GM12878 (cell line): ENCODE measurements at regions of chrX and their contacts with region 1.

Region 1: GRCh38 chrX:65595460-65595876 is 60.9 kb upstream of the LAS1L start:
- DNase-seq: peak; percentile 89
- ATAC-seq: peak; percentile 88
- H3K4me3 ChIP-seq: no peak overlapping the region
- H3K27ac ChIP-seq: peak overlapping the region; percentile 67
- H3K4me1 ChIP-seq: peaks cover 19% of the 10 kb centered on the region
- H3K27me3 ChIP-seq: no peaks in the 10 kb centered on the region
- CTCF ChIP-seq: peak; percentile 98 to 100 (median 99); a peak in 5 of 6 replicates
- EP300 ChIP-seq: no peak
- POLR2A ChIP-seq: no peak
- RAD21 ChIP-seq: peak; percentile 94

Region 2: GRCh38 chrX:65667503-65668376 is 72.3 kb after region 1 on chrX and contains the start of gene MSN:
- CTCF ChIA-PET with region 1: interaction called, 8 read pairs
- POLR2A ChIA-PET with region 1: interaction called, 9 read pairs
- RAD21 ChIA-PET with region 1: interaction called, 12 read pairs
- SMC1A ChIA-PET with region 1: interaction called, 7 read pairs
- in situ Hi-C with region 1: no loop called
- intact Hi-C with region 1: loop called (anchors 1 kb)
- DNase-seq: no peak
- ATAC-seq: peak; percentile 84
- H3K4me3 ChIP-seq: peak within 1 kb of the TSS; percentile 90
- H3K27ac ChIP-seq: peak within 1 kb of the TSS; percentile 83
- H3K4me1 ChIP-seq: peaks cover 4% of the 10 kb centered on the region; the same call in 1 of the 2 replicates
- H3K27me3 ChIP-seq: no peaks in the 10 kb centered on the region
- CTCF ChIP-seq: peak; percentile 5 to 14 (median 14); a peak in 1 of 6 replicates
- EP300 ChIP-seq: no peak
- POLR2A ChIP-seq: peak; percentile 85
- RAD21 ChIP-seq: no peak
- polyA plus RNA-seq, gene MSN: 93.8 to 104 TPM

Region 3: DNA sequence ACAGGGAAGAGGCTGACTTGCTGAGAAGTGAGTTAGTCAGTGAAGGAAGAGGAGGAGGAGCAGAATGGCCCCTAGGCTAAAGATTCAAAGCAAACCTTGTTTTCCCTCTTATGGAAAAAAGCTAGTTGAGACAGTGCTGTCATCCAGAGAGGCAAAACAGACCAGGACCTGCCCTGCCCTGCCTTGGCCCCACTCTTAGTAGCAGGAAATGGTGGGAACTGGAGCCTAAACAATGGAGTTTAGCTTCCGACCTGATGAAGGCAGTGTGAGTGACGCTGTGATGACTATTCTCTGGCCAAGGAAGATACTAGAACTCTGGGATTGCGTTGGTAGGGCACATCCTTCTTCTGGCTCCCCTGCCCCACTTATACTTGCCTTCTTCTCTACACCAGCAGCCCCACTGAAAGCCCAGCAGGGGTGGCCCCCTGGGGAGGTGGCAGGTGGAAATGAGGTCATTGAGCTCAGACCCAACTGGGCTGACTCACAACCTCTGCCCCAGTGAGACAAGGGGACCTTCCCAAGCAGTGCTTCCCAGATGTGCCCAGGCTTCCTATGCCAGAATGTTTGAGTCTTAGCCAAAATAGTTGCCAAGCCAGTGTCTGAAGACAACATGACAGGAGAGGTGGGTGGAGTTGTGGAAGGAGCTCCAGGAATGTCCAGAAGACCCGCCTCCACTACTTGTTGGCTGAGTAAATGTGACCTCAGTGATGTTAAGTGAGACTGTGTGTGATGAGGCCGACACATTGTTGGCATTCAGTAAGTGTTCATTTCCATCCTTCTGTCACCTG is 110.8 kb after region 1 on chrX:
- CTCF ChIA-PET with region 1: interaction called, 26 read pairs
- POLR2A ChIA-PET with region 1: no interaction called
- RAD21 ChIA-PET with region 1: interaction called, 12 read pairs
- SMC1A ChIA-PET with region 1: interaction called, 21 read pairs
- in situ Hi-C with region 1: no loop called
- intact Hi-C with region 1: no loop called
- DNase-seq: no peak
- ATAC-seq: peak; percentile 77
- H3K4me3 ChIP-seq: no peak overlapping the region
- H3K27ac ChIP-seq: peak overlapping the region; percentile 29
- H3K4me1 ChIP-seq: peaks cover 33% of the 10 kb centered on the region
- H3K27me3 ChIP-seq: no peaks in the 10 kb centered on the region
- CTCF ChIP-seq: no peak
- EP300 ChIP-seq: no peak
- POLR2A ChIP-seq: peak; percentile 34; the same call in 1 of the 2 replicates
- RAD21 ChIP-seq: no peak

Region 4: GRCh38 chrX:65866146-65866545 is 270.7 kb after region 1 on chrX:
- CTCF ChIA-PET with region 1: no interaction called
- POLR2A ChIA-PET with region 1: no interaction called
- RAD21 ChIA-PET with region 1: no interaction called
- SMC1A ChIA-PET with region 1: no interaction called
- in situ Hi-C with region 1: no loop called
- intact Hi-C with region 1: loop called (anchors 5 kb)
- DNase-seq: peak; percentile 55
- ATAC-seq: peak; percentile 95
- H3K4me3 ChIP-seq: no peak overlapping the region
- H3K27ac ChIP-seq: no peak overlapping the region
- H3K4me1 ChIP-seq: no peaks in the 10 kb centered on the region; the same call in 1 of the 2 replicates
- H3K27me3 ChIP-seq: no peaks in the 10 kb centered on the region
- CTCF ChIP-seq: no peak
- EP300 ChIP-seq: no peak
- POLR2A ChIP-seq: no peak
- RAD21 ChIP-seq: no peak

Region 5: GRCh38 chrX:66110112-66110511 is 514.6 kb after region 1 on chrX:
- CTCF ChIA-PET with region 1: interaction called, 4 read pairs
- POLR2A ChIA-PET with region 1: no interaction called
- RAD21 ChIA-PET with region 1: interaction called, 6 read pairs
- SMC1A ChIA-PET with region 1: no interaction called
- in situ Hi-C with region 1: no loop called
- intact Hi-C with region 1: loop called (anchors 5 kb)
- DNase-seq: no peak
- ATAC-seq: peak; percentile 32
- H3K4me3 ChIP-seq: no peak overlapping the region
- H3K27ac ChIP-seq: no peak overlapping the region
- H3K4me1 ChIP-seq: no peaks in the 10 kb centered on the region
- H3K27me3 ChIP-seq: no peaks in the 10 kb centered on the region
- CTCF ChIP-seq: peak; percentile 33 to 52 (median 34)
- EP300 ChIP-seq: no peak
- POLR2A ChIP-seq: no peak
- RAD21 ChIP-seq: peak; percentile 66